ENCODE measurements at regions of chr10 and their contacts with region 1.

Region 1: DNA sequence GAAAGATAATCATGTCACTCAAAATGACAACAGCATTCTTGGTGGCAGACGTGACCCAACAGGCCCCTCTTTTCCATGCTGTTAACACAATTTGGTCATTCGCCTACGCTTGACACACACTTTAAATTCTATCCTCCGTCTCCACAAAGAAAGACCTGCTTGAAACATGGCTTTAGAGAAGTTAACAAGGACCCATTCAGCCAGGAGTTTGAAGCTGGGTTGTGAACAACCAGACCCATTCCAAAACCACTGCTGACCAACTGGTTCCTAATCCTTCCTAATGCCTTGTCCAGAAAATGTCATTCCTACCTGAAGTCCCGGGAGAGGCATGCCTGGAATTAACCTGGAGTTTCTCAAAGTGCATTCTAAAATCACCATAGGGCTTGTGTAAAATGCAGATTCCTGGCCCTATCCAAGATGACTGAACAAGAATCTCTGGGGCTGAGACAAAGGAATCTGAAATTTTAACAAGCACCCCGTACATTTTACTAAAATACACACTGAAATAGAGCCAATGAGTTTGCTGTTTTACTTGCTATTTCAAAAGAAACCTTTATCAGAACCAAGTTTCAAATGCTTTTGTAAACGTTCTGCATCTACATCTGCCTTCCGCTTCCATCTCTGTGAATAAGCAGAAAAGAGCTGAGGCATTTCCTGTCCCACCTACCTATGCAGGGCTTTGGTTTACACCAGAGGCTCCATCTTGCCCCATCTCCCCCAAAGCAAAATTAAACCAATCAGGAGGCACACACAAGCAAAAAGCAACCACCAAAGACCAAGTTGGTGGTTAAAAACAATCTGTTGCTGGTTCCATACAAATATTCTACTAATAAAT is 84.4 kb downstream of the FGFR2 start:
- DNase-seq: no peak

Region 2: GRCh38 chr10:121469797-121470606 is 43.9 kb before region 1 on chr10:
- intact Hi-C with region 1: loop called in 1 of 2 experiments (anchors 1 kb)
- DNase-seq: no peak

Measured in posterior vena cava (tissue), 2 donors.